ENCODE measurements at regions of chr3 and their contacts with region 1.

Region 1: GRCh38 chr3:136861890-136862616 is at the start of gene NCK1:
- DNase-seq: peak; percentile 98 to 99 (median 99)
- H3K4me3 ChIP-seq: peak within 1 kb of the TSS; percentile 76 to 96 (median 91)
- H3K27ac ChIP-seq: peak within 1 kb of the TSS; percentile 73 to 92
- H3K4me1 ChIP-seq: peaks cover 10 to 45% (median 31%) of the 10 kb centered on the region in 4 experiments
- H3K27me3 ChIP-seq: no peaks in the 10 kb centered on the region

Region 2: GRCh38 chr3:136555484-136555883 is 306.6 kb before region 1 on chr3:
- CTCF ChIA-PET with region 1: no interaction called
- POLR2A ChIA-PET with region 1: no interaction called
- DNase-seq: no peak
- H3K4me3 ChIP-seq: no peak overlapping the region
- H3K27ac ChIP-seq: no peak overlapping the region
- H3K4me1 ChIP-seq: no peaks in the 10 kb centered on the region
- H3K27me3 ChIP-seq: no peaks in the 10 kb centered on the region

Region 3: DNA sequence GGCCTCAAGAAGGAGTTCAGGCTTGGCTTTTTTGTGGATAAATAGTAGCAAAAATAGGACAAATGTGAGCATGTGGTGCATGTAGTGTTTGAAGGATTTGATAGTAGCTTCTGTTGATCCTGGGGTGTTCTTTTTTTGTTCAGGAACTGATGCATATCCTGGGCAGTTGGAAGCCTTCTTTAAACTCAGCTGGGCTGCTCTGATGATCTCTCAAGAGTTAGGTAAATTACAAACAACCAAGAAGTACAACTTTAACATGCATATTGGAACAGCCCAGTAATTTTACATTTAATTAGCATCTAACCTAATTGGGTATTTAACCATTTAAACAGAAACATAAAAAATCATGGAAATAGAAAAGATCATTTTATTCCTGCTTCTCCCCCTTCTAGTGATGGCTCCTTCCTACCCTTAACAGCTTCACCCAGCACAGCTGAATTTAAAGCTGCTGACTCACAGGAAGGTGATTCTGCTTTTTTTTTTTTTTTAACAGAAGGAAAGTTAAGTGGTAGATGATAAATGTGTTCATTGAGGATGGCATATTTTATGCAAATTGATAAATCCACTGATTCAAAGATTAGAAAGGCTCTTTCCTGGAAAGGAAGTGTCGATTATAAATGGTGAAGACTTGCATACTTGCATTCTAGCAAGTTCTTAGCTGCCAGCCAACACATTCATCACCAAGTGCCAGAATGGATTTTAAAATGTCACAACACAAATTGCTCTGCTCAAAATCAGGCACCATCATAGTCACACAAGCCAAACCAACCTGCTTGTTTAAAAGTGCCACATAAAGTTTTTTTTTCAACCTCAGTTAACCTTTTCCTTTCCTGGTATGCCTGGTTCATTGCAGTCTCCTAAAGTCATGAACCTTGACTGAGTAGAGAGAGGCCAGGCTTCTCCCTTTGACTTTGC is 23.2 kb before region 1 on chr3:
- CTCF ChIA-PET with region 1: interaction called, 56 read pairs
- POLR2A ChIA-PET with region 1: interaction called, 10 read pairs
- DNase-seq: peak; percentile 73 to 93 (median 91)
- H3K4me3 ChIP-seq: peak overlapping the region in 3 of 7 experiments; percentile 16 to 40 (median 28)
- H3K27ac ChIP-seq: peak overlapping the region; percentile 62 to 83
- H3K4me1 ChIP-seq: peaks cover 20 to 63% (median 50%) of the 10 kb centered on the region in 4 experiments
- H3K27me3 ChIP-seq: no peaks in the 10 kb centered on the region

Region 4: DNA sequence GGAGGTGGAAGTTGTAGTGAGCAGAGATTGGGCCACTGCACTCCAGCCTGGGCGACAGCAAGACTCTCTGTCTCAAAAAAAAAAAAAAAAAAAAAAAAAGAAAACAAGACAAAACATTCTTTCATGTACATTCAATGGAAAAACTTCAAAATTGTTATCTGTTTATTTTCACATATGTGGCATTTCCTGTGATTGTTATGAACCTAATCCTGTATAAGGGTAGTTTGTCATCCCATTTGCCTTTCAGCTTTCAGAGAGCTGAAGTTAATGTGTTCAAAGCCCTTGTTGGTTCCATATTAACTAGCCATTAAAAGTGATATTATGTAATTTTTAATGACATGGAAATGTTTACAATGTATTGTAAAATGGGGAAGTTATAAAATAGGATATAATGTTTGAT is 17.3 kb before region 1 on chr3:
- CTCF ChIA-PET with region 1: interaction called, 56 read pairs
- POLR2A ChIA-PET with region 1: interaction called, 3 read pairs
- DNase-seq: no peak
- H3K4me3 ChIP-seq: no peak overlapping the region
- H3K27ac ChIP-seq: no peak overlapping the region
- H3K4me1 ChIP-seq: peaks cover 6 to 12% (median 8%) of the 10 kb centered on the region in 4 experiments
- H3K27me3 ChIP-seq: no peaks in the 10 kb centered on the region

Region 5: DNA sequence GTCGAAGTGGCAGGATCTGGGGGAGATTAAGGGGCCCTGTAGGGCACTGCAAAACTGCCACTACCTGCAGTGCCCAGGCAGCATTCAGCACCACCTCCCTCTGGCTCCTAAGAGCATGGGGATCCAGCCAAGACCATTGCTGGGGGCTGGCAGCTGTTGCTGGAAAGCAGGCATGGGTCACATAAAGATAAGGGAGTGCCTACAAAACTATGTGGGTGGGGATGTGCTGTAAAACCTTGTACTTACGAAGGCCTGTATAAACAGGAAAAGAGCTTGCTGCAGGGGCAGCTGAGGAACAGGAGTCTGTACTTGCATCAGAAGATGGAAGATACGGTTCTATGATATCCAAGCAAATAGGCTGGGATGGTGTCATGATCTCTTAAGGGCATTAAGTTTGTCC is 122.8 kb after region 1 on chr3:
- CTCF ChIA-PET with region 1: no interaction called
- POLR2A ChIA-PET with region 1: no interaction called
- DNase-seq: peak in 1 of 3 donors; percentile 13
- H3K4me3 ChIP-seq: no peak overlapping the region
- H3K27ac ChIP-seq: no peak overlapping the region
- H3K4me1 ChIP-seq: no peaks in the 10 kb centered on the region
- H3K27me3 ChIP-seq: no peaks in the 10 kb centered on the region

Measured in common myeloid progenitor, CD34-positive (primary cell).